ENCODE measurements at regions of chr18 and their contacts with region 1.

Region 1: GRCh38 chr18:53490019-53490418 is 734.5 kb downstream of the MBD2 start:
- DNase-seq: no peak
- H3K4me3 ChIP-seq: no peak overlapping the region
- CTCF ChIP-seq: no peak
- POLR2A ChIP-seq: no peak

Region 2: DNA sequence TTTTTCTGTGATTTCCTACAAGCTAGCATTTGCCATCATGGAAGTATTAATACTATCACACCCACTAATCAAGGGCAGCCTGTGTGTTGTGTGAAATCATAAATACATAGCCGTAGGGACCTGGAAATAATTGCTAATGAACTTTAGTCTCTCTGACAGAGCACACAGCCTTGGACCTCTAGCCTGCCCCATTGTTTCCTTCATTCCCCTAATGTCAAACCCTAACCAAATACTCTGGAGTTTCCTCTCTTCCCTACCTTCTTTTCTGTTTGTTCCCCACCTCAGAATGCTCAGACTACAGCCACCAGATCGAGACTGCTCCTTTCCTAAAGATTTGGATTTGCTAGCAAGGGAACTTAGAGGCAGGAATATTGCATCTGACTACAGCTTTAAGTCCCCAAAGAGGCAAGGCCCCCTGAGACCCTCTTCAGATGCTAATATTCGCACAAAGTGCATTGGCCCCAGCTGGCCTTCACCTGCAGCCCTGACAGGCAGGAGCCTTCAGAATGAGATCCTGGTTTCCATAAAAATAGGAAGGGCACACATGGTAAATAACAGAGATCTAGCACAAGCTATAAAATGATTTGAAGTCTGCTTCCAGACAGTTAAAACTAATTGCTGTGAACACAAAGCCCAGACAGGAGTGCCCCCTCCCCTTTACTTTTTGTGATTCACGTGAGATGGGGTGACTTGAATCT is 1429.3 kb before region 1 on chr18:
- intact Hi-C with region 1: no loop called
- DNase-seq: no peak
- H3K4me3 ChIP-seq: no peak overlapping the region
- CTCF ChIP-seq: no peak
- POLR2A ChIP-seq: no peak

Region 3: GRCh38 chr18:53451902-53452301 is 38.1 kb before region 1 on chr18:
- intact Hi-C with region 1: no loop called
- DNase-seq: no peak
- H3K4me3 ChIP-seq: no peak overlapping the region
- CTCF ChIP-seq: no peak
- POLR2A ChIP-seq: no peak

Region 4: DNA sequence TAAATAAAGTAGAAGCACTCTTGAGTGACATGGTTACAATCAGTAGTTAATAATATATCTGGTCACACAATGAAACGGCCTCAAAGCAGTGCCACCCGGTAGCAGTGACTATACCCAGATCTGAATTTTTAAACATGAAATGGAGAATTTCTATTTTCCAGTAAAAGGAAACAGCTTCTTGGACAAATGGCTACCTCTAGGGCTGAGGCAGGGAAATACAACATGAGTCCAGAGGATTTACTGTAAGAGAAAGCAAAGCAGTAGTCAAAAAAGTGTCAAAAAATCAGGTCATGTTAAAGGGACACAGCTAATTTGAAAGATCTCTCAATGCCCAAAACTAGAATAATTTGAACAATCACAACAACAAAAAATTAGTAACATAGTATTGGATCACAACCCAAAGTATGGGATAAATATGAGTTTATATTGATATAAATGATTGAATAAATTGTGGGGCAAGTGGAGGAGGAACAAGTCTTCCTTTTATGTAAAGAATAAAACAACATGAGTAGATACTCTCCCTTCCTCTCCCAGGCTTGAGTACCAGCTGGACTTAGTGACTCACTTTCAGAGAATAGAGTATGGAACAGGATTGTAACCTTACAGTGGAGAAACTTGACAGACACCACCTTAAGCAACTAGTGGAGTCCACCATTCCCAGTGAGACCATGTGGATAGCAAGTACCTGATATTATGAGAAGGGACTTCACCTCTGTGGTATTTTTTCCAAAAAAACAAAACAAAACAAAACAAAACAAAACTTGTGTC is 553.6 kb after region 1 on chr18:
- intact Hi-C with region 1: loop called (anchors 5 kb)
- DNase-seq: no peak
- H3K4me3 ChIP-seq: no peak overlapping the region
- CTCF ChIP-seq: no peak
- POLR2A ChIP-seq: no peak

Region 5: GRCh38 chr18:54240629-54241107 is 750.6 kb after region 1 on chr18:
- intact Hi-C with region 1: no loop called
- DNase-seq: peak in 1 of 2 donors; percentile 89
- H3K4me3 ChIP-seq: no peak overlapping the region
- CTCF ChIP-seq: no peak
- POLR2A ChIP-seq: no peak

Measured in lower leg skin (tissue), 4 donors.